AG04450 (cell line): ENCODE measurements at regions of chr5 and their contacts with region 1.

Region 1: DNA sequence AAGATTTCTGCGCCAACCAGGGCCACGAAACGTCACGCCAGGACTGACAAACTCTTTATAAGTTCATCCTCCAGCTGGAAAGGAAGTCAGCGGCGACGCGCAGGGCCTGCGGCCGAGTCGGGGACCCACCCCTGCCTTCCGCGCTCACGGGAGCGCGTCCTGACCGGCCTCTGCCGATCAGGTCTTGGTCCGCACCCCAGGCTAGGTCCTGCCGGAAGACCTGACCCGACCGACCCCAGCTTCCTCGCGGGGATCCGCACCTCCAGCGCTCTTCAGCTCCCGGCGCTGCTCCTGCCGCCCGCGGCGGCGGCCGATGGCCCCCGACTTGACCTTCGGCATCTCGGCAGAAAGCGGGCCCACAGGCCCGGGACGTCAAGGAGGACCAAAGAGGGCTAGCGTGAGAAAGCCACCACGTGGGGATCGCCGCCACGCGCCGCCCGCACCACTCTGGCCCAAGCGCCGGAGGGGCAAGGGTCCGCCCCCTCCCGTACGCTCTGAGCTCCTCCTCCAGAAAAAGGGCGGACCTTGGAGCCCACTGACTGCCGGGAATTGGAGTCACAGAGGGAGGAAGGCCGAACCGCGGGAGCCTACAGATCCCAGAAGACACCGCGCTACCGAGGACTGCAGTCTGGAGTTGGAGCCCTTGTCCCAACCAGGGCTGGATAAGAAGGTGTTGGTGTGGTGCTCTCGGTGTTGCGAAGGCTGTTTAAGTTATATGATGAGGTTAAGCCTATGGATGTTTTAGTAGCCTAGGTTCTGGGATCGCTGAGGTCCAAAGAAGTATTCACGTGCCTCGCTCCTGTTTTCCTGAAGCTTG is at the start of gene DIMT1:
- DNase-seq: peak; percentile 93
- H3K4me3 ChIP-seq: peak within 1 kb of the TSS; percentile 87
- H3K27ac ChIP-seq: peak within 1 kb of the TSS; percentile 95
- H3K27me3 ChIP-seq: no peaks in the 10 kb centered on the region
- CTCF ChIP-seq: no peak
- polyA plus RNA-seq, gene DIMT1: 21.1 and 31.1 TPM in 2 replicates

Region 2: GRCh38 chr5:62305715-62306322 is 97.8 kb before region 1 on chr5 and contains the start of gene KIF2A:
- CTCF ChIA-PET with region 1: no interaction called
- POLR2A ChIA-PET with region 1: interaction called, 14 read pairs
- DNase-seq: peak; percentile 73
- H3K4me3 ChIP-seq: peak within 1 kb of the TSS; percentile 81
- H3K27ac ChIP-seq: peak within 1 kb of the TSS; percentile 65
- H3K27me3 ChIP-seq: no peaks in the 10 kb centered on the region
- CTCF ChIP-seq: peak; percentile 9; the same call in 1 of the 2 replicates
- polyA plus RNA-seq, gene KIF2A: 37.2 and 50.8 TPM in 2 replicates

Region 3: DNA sequence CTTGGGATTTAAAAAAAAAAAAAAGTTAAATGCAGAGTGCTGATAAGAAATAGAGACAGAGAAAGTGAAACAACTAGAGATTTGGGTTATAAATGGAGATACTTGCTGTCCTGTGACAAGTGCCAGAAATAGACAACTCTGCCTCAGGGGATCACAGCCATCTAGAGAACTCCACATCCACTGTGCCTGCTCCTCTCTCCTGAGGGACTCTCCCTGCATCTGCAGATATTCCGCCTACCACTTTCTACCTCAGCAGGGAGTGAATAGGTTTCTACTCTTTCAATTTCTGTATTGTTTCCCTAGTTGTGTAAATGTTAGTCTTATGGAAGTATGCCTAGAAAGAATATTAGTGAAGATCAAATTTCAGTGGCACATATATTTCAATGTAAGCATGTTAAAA is 1251.4 kb after region 1 on chr5:
- CTCF ChIA-PET with region 1: no interaction called
- POLR2A ChIA-PET with region 1: no interaction called
- DNase-seq: no peak
- H3K4me3 ChIP-seq: no peak overlapping the region
- H3K27ac ChIP-seq: no peak overlapping the region
- H3K27me3 ChIP-seq: no peaks in the 10 kb centered on the region
- CTCF ChIP-seq: no peak

Region 4: GRCh38 chr5:64026493-64026892 is 1622.9 kb after region 1 on chr5:
- CTCF ChIA-PET with region 1: no interaction called
- POLR2A ChIA-PET with region 1: no interaction called
- DNase-seq: no peak
- H3K4me3 ChIP-seq: no peak overlapping the region
- H3K27ac ChIP-seq: no peak overlapping the region
- H3K27me3 ChIP-seq: no peaks in the 10 kb centered on the region
- CTCF ChIP-seq: no peak